ENCODE measurements at regions of chr2 and their contacts with region 1.

Region 1: DNA sequence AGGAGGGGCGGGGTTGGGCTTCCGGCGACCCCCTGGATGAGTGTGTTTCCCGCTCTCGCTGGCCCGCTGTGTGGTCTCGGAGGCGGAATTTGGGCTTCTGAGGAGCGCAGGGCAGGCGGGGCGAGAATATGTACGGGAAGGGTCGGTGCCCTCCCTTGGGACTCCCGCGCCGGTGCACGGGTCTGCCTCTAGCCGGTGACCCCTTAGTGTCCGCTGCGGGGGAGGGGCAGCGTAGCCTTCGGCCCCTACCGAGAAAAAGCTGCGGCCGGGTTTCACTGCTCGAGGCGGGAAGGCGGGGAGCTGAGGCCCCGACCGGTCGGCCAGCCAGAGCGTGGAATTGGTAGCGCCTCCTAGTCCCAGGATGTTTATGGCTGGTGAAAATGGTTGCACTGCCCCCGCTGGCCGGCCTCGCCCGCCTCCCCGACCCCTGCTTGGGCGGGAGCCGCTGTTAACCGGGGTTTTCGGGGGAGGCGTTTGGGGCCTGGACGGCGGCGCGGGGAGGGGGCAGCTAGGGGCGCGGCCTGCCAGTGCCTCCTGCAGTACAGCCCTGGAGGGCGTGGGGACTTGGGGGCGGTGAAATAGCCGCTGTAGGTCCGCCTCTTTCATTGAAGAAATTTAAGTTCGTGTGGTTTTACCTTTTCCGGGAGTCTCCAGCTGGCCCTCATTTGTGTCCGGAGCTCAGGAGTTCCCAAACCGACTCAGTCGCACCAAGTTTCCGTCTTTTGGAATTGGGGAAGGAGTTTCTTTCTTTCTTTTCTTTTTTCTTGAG is at the start of gene UGP2:
- DNase-seq: peak; percentile 95
- ATAC-seq: peak; percentile 92
- total RNA-seq, gene UGP2: 363 TPM

Region 2: DNA sequence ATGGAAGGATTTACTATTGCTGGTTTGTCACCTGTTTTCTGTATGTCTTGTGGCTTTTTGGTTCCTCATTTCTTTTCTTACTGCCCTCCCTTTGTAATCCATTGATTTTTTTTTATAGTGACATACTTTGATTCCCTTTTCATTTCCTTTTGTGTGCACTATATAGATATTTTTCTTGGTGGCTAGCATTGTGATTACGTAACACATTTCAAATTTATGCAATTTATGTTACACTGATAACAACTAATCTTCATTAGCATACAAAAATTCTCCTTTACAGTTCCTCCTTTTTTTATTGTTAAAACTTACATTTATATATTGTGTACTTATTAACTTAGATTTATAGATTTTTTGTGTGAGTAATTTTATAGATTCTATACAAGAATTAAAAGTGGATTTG is 710.2 kb before region 1 on chr2:
- intact Hi-C with region 1: no loop called
- DNase-seq: no peak
- ATAC-seq: no peak

Region 3: GRCh38 chr2:63698825-63699548 is 142.5 kb before region 1 on chr2:
- intact Hi-C with region 1: loop called (anchors 5 kb)
- DNase-seq: no peak
- ATAC-seq: peak; percentile 90

Region 4: DNA sequence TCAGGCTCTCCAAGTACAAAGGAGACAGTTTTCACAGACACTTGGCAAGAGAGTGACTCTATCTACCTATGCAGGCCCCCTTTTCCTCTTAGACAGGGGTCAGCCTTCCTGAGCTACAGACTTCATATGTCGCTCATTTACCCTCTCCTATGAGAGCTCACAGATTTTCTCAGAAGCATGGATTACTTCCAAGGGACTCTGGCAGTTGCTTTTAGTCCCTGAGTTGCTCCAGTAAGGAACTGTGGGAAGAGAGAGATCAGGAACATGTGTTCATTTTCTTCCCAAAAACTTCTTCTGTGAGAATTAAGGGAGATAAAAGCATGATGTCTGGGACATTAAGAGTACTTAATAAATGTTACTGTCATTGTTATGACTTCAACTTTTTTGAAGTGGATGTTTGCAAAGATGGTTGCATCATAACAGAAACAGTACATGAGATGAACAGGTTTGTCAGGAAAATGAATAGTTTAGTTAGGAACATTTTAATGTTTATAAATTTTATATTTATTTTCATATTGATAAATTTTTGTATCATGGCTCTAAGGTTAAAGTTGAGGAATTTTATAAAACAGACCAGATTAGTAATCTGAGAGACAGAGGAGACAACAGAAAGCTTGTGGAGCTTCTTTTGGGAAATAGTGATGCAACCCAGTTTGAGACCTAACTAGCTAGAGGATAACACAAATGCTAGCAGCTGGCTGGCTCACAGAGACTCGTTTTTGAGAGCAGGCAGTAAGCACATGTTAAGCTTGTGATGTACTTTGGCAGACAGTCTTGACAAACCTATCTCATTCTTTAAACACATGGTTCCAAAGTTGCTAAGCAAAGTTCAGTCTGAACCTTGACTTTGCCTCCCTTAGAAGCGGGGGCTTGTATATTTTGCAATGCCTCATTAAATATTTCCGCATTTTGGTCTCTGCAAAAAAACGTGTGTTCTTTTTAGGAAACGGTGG is 21.4 kb before region 1 on chr2:
- intact Hi-C with region 1: loop called (anchors 2 kb)
- DNase-seq: no peak
- ATAC-seq: peak; percentile 93

Region 5: GRCh38 chr2:63875131-63875527 is 33.7 kb after region 1 on chr2:
- intact Hi-C with region 1: loop called (anchors 5 kb)
- DNase-seq: no peak
- ATAC-seq: no peak